Activated T-helper 1 cell treated with anti-CD3 and anti-CD28 coated beads, Interleukin-12 subunit alpha, Interleukin-12 subunit beta, Interleukin-2, Interleukin-4 antibody, amounts not matched to agents 30 ng/mL and 10 ng/mL and 1 ng/mL, durations not matched to agents 14 hours and 24 hours and 36 hours (primary cell): ENCODE measurements at regions of chr13 and their contacts with region 1.

Region 1: DNA sequence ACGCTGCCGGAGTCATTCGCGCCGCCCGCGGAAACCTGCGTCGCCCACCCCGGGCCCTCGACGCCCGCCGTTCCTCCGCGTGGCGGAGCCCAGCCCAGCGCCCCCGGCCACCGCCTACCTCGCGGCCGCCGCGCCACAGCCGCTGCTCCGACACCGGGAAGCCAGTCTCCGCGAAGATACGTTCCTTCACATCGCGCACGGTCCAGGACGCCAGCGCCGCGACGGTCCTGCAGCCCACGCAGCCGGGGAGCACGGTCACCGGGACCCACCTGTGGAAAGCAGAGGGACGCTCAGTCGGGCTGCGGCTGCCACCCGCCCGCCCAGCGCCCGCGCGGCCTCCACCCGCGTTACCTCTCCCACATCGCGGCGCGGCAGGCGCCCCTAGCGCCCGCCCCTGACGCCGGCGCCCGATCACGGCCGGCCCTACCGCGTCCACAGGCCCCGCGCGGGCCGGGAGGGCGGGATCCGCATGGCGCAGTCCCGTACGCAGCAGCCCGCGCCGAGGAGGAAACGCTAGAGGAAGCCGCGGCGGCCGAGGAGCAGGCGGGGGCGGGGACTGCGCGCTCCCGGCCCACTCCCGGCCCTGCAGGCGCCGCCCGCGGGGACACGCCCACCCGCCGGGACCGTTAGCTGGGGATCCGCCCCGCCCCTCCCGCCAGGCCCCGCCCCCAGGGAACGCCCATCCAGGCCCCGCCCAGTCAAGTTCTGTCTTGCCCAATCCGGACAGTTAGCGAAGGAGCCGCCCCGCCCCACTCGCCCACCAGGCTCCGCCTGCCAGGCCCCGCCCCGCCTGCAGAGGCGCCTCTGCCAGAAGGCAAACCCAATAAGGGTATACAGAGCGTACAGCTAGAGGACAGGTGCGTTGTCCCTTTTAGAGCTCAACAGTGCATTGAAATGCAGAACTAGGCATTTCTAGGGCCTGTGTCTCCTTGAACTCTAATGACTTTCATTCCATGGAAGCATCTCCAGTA is 58.2 kb downstream of the SACS start:
- DNase-seq: peak; percentile 92
- H3K4me3 Mint-ChIP-seq: peak overlapping the region; percentile 78
- H3K27ac Mint-ChIP-seq: peak overlapping the region; percentile 36
- H3K4me1 Mint-ChIP-seq: peaks cover 74% of the 10 kb centered on the region
- H3K27me3 Mint-ChIP-seq: peaks cover 4% of the 10 kb centered on the region

Region 2: DNA sequence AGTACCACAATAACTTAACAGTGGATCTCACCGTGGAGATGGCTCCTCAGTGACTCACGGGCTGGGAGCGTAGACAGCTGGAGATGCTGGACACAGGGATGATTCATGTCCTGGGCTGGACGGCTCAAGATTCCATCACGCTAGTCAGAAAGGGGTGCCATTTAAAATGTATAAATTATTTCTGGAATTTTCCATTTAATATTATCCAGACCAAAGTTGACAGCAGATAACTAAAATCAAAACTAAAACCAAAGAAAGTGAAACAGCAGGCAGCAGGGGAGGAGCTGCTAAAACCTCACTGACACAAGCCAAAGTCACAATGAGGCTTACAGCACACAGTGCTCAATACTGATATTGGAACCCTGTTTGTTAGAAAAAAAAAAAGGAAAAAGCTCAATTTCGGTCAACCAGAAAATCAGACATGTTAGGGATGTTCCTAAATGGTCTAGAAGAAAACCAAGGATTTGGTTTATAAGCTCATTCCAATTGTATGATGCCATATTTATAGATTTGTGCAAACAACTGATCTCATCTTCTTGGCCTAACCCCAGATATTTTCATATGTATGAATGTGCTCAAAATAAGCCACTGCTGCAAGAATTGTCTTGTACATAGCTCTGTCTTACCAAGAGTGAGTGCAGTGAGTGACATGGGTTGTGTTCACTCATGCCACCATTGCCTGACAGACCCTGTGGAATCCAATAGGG is 53.6 kb before region 1 on chr13:
- intact Hi-C with region 1: loop called (anchors 2 kb)
- DNase-seq: peak; percentile 7
- H3K4me3 Mint-ChIP-seq: peak overlapping the region; percentile 5
- H3K27ac Mint-ChIP-seq: peak overlapping the region; percentile 4
- H3K4me1 Mint-ChIP-seq: peaks cover 56% of the 10 kb centered on the region
- H3K27me3 Mint-ChIP-seq: peaks cover 8% of the 10 kb centered on the region

Region 3: DNA sequence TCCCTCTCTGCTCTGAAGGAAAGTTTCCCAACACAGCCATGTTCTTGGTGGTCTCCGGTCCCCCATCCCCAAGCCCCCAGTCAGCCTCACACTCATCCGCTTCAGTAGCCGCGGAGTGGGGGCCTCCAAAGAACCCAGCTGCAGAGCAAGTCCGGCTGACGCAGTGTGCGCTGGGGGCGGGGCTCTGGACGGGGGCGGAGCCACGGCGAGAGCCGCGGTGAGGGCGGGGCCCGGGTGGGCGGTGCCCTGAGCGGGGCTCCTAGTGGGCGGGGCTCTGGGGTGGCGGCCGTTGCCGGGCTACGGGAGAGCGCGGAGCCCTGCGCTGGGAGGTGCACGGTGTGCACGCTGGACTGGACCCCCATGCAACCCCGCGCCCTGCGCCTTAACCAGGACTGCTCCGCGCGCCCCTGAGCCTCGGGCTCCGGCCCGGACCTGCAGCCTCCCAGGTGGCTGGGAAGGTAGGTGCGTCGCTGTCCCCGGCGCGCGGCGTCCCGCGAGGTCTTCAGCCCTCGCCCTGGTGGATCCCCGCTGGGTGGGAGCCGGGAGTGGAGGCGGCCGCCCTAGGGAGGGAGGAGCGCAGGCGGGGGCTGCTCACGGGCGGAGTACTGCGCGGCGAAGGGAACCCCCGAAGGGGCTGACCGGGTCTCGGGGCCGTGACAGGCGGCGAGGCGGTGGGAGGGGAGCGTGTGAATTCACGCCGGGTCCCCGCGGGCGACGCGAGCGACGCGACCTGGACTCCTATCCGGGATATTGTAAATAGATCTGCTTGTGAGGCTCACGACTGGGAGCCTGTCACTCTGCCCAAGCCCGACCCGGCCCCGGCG is 204.0 kb after region 1 on chr13:
- intact Hi-C with region 1: loop called (anchors 1 kb)
- DNase-seq: peak; percentile 87
- H3K4me3 Mint-ChIP-seq: peak overlapping the region; percentile 79
- H3K27ac Mint-ChIP-seq: no peak overlapping the region
- H3K4me1 Mint-ChIP-seq: peaks cover 24% of the 10 kb centered on the region
- H3K27me3 Mint-ChIP-seq: peaks cover 59% of the 10 kb centered on the region

Region 4: DNA sequence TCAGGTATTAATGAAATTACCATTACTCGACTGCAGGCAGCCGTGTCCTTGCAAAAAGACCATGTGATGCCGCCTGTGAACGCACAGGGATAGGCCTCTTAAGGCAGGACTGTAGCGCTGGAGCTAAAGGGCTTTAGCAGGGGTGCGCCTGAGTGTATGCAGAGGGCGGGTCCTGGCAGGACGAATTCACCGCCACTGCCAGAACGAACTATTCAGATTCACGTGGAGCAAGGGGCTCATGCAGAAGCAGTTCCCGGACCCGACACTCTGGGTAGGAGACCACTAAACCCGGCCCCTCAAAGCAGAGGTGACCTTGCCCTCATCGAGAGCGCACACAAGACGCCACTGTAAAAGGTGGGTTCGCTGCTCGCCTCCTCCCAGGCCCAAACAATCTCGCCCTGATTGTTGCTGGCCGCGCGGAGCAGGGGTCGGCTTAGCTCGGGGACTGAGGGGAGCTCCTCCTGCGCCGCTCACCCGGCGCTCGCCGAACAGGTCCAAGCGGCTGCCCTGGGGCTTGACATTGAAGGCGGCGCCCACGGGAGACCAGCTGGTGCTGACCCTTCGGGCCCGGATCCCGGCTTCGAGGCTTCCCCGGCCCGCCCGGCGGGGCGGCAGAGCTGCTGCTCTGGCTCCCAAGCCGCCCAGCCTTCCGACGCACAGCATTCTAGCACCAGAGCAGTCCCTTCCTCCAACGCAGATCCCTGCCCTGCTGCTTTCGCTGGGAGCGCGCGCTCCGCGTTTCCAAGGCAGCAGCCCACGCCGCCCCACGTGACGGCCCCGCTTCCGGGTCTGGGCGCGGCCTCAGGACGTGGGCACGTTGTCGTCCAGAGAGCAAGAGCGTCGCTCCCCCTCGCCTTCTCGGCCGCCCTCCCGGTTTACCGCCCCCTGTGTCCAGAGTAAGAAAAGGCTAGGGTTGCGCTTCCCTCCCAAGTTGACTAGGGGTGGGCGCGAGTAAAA is 513.6 kb after region 1 on chr13 and contains the start of gene MIPEP:
- intact Hi-C with region 1: loop called (anchors 1 kb)
- DNase-seq: peak; percentile 86
- H3K4me3 Mint-ChIP-seq: peak within 1 kb of the TSS; percentile 89
- H3K27ac Mint-ChIP-seq: peak within 1 kb of the TSS; percentile 90
- H3K4me1 Mint-ChIP-seq: peaks cover 31% of the 10 kb centered on the region
- H3K27me3 Mint-ChIP-seq: no peaks in the 10 kb centered on the region
- total RNA-seq, gene MIPEP: 7.3 and 7.8 TPM in 2 replicates

Region 5: GRCh38 chr13:24160454-24161009 is 785.2 kb after region 1 on chr13 and contains the start of gene SPATA13:
- intact Hi-C with region 1: loop called (anchors 10 kb)
- DNase-seq: peak; percentile 86
- H3K4me3 Mint-ChIP-seq: peak within 1 kb of the TSS; percentile 92
- H3K27ac Mint-ChIP-seq: peak within 1 kb of the TSS; percentile 76
- H3K4me1 Mint-ChIP-seq: peaks cover 26% of the 10 kb centered on the region
- H3K27me3 Mint-ChIP-seq: peaks cover 7% of the 10 kb centered on the region
- total RNA-seq, gene SPATA13: 56.2 and 56.3 TPM in 2 replicates

Region 6: DNA sequence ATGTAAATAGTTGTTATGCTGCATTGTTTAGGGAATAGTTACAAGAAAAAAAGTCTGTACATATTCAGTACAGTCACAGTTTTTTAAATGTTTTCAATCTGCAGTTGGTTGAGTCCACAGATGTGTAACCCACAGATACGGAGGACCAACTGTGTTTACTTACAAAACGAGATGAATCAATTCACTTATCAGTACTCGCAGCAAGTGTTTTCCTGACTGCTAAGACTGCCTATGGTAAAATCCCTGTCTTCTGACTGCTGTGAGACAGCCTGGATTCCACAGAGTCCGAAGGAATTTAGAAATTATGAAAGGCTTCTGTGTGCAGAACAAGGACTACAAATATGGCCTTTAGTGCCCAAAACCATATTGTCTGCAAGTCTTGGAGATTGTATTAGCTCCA is 888.3 kb after region 1 on chr13:
- intact Hi-C with region 1: no loop called
- DNase-seq: no peak
- H3K4me3 Mint-ChIP-seq: peak overlapping the region; percentile 45
- H3K27ac Mint-ChIP-seq: no peak overlapping the region
- H3K4me1 Mint-ChIP-seq: peaks cover 87% of the 10 kb centered on the region
- H3K27me3 Mint-ChIP-seq: no peaks in the 10 kb centered on the region